ENCODE measurements at regions of chr11 and their contacts with region 1.

Region 1: DNA sequence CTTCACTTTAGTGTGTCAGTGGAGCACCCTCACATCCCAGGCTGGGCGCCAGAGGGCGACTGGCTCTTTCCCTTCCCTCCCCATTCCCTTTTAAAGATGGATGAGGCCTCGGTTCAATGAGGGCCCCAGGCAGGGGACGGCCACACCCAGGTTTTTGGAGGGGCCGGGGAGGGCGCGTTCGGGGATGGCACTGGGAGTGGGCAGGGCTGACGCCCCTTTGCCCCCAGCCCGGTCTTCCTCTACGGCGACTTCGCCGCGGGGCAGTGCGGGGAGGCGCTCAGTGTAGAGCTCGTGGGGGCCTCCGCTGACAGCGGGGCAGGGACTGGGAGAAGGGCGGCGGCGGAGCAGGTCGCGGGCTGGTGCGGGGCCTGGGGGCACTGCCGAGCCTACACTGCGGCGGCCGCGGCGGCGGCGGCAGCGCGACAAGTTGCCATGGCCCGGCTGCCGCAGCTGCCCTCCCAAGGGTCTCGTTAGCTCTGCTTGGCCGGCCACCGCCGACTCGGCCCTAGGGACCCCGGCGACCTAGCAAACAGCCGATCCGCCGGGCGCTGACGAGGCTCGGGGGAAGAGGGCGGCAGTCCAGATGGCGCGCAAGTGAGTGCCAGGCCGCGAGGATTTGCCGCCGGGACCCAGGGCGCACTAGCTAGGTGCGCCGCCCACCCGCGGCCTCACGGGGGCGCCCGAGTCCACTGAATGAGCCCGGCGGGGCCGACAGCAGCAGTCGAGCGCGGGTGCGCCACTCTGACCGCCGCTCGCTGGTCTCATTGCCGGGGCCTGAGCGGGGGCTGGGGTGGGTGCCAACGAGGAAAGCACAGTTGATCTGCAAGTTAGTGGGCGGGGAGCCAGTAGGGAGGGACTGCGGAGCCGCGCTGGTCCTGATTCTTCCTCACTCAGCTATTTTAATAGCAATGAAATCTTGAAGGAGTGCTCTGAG is 92.7 kb downstream of the RRM1 start:
- DNase-seq: peak; percentile 96
- ATAC-seq: peak; percentile 91

Region 2: DNA sequence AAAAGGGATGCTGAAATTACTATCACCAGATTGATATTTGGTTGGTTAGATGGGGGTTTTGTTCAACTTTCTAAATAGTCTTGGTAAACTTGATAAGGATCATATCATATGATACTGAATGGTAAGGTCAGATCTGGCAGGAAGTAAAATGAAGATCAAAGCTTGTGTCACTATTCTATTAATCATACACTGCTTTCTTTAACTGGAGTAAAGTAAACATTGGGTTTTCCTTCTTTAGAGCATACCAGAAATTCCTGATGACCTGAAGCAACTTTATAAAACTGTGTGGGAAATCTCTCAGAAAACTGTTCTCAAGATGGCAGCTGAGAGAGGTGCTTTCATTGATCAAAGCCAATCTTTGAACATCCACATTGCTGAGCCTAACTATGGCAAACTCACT is 52.5 kb before region 1 on chr11:
- intact Hi-C with region 1: no loop called
- DNase-seq: no peak
- ATAC-seq: no peak

Region 3: DNA sequence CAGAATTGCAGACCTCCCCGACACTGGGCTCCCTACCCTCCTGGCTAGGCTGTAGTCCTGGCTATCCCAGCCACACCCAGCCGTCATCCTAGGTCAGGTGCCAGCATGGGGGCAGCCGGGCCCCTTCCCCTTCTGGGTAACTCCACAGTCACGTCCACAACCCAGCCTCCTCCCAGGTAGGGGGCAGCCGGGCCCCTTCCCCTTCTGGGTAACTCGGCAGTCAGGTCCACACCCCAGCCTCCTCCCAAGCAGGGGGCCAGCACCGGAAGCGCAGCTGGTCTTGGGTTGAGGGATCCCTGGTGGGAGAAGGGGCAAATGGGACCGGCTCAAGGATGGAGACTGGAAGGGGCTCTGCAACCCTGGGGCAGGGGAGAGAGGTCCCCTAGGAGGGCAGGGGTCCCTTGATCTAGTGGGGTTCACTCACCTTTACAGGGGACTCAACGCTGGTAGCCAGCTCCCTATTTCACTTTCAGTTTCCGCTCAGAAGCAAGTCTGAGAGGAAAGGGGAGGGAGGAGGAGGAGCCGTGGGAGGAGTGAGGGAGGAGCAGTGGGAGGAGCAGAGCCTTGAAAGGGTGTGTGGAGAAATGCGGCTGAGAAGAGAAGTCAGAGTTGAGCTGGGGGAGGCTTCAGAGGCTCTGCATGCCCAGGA is 206.0 kb after region 1 on chr11 and contains the start of gene TRIM21:
- intact Hi-C with region 1: loop called (anchors 5 kb)
- DNase-seq: peak; percentile 85
- ATAC-seq: peak; percentile 100
- total RNA-seq, gene TRIM21: 10.5 TPM

Region 4: DNA sequence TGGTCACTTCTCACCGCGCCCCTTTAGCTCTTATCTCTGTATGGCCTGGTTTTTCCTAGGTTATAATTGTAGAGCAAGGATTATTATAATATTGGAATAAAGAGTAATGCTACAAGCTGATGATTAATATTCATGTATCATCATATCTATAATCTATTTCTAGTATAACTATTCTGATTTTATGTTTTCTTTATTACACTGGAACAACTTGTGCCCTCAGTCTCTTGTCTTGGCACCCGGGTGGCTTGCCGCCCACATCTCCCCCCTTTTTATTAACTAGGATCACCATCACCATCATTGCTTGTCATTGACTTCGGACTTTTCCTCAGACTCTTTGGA is 306.1 kb after region 1 on chr11:
- intact Hi-C with region 1: loop called (anchors 1 kb)
- DNase-seq: no peak
- ATAC-seq: no peak

Region 5: GRCh38 chr11:4539603-4540219 is 352.4 kb after region 1 on chr11:
- intact Hi-C with region 1: loop called (anchors 1 kb)
- DNase-seq: peak; percentile 74
- ATAC-seq: peak; percentile 54

Measured in Right ventricle myocardium inferior (tissue), 1 donor.